Activated B cell treated with CpG ODN at 0.5 μM for 24 hours (primary cell): ENCODE measurements at regions of chr10 and their contacts with region 1.

Region 1: DNA sequence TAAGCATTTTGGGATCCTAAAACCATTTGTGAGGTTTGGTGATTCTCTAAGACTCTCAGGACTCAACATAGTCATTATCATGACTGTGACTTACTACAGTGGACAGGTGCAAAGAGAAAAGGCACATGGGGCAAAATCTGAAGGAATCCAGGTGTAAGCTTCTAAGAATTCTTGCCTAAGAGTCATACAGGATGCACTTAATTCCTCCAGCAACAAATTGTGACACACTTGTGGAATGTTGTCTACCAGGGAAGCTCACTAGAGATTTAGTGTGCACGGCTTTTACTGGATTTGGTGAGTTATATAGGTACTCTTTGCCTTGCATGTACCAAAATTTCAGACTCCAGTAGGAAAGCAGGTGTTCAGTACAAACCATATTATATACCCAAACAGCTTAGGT is 47.9 kb downstream of the WAC start:
- DNase-seq: no peak
- ATAC-seq: no peak
- H3K4me3 Mint-ChIP-seq: no peak overlapping the region
- H3K27ac Mint-ChIP-seq: no peak overlapping the region
- H3K4me1 Mint-ChIP-seq: peaks cover 34% of the 10 kb centered on the region
- H3K27me3 Mint-ChIP-seq: no peaks in the 10 kb centered on the region
- CTCF ChIP-seq: no peak

Region 2: GRCh38 chr10:28541717-28542365 is 39.0 kb before region 1 on chr10:
- CTCF ChIA-PET with region 1: no interaction called
- POLR2A ChIA-PET with region 1: no interaction called
- intact Hi-C with region 1: loop called (anchors 5 kb)
- DNase-seq: no peak
- ATAC-seq: no peak
- H3K4me3 Mint-ChIP-seq: no peak overlapping the region
- H3K27ac Mint-ChIP-seq: no peak overlapping the region
- H3K4me1 Mint-ChIP-seq: peaks cover 52% of the 10 kb centered on the region
- H3K27me3 Mint-ChIP-seq: no peaks in the 10 kb centered on the region
- CTCF ChIP-seq: no peak

Region 3: GRCh38 chr10:28595613-28596012 is 14.8 kb after region 1 on chr10:
- CTCF ChIA-PET with region 1: no interaction called
- POLR2A ChIA-PET with region 1: no interaction called
- intact Hi-C with region 1: loop called (anchors 2 kb)
- DNase-seq: no peak
- ATAC-seq: no peak
- H3K4me3 Mint-ChIP-seq: no peak overlapping the region
- H3K27ac Mint-ChIP-seq: no peak overlapping the region
- H3K4me1 Mint-ChIP-seq: peaks cover 17% of the 10 kb centered on the region
- H3K27me3 Mint-ChIP-seq: no peaks in the 10 kb centered on the region
- CTCF ChIP-seq: no peak